ENCODE measurements at regions of chr17 and their contacts with region 1.

Region 1: DNA sequence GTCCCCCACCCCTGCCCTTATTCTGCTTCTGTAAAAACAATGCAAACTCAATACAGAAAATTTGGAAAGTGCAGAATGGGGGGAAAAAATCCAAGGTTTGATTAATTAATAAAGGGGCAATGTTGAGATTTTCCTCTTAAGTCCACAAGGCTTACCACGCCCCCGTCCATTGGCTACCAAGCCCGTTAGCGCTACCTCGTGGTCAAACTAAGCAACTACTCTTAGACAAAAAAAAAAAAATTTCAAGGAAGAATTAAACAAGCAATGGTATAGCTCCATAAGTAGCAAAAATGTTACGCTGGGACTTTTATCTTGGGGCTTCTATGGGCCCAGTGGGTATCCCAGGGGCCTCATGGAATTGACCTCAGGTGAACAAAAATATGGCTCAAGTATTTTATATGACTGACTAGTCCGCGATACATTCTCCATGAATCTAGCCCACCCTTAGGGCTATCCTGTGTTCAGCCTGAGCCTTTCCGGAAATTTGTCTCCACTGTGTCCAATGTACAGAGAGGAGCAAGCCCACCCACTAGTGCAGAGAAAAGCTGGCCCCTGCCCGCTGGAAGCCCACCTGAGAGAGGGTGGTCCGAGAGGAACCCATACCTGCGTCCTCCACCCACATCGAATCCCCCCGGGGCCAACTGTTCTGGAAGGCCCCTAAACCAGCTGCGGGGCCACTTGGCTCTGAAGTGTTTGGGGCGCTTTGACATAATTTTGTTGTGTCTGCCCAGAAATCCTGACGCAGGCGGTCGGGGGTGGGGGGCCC is 19.1 kb upstream of the TEX2 start:
- DNase-seq: peak; percentile 87
- H3K4me3 ChIP-seq: 0 out of 2 replicates have a peak overlapping the region, but pooled peaks have one; percentile 9
- H3K27ac ChIP-seq: no peak overlapping the region
- H3K4me1 ChIP-seq: peaks cover 10% of the 10 kb centered on the region; the same call in 1 of the 2 replicates
- H3K27me3 ChIP-seq: no peaks in the 10 kb centered on the region

Region 2: GRCh38 chr17:63919311-63919723 is 362.8 kb before region 1 on chr17:
- in situ Hi-C with region 1: loop called (anchors 25 kb)
- DNase-seq: peak; percentile 72
- H3K4me3 ChIP-seq: no peak overlapping the region
- H3K27ac ChIP-seq: no peak overlapping the region
- H3K4me1 ChIP-seq: no peaks in the 10 kb centered on the region
- H3K27me3 ChIP-seq: peaks cover 13% of the 10 kb centered on the region; the same call in 1 of the 2 replicates

Region 3: GRCh38 chr17:64036198-64036922 is 245.8 kb before region 1 on chr17:
- in situ Hi-C with region 1: loop called (anchors 10 kb)
- DNase-seq: no peak
- H3K4me3 ChIP-seq: no peak overlapping the region
- H3K27ac ChIP-seq: no peak overlapping the region
- H3K4me1 ChIP-seq: no peaks in the 10 kb centered on the region
- H3K27me3 ChIP-seq: no peaks in the 10 kb centered on the region

Region 4: GRCh38 chr17:64628641-64629040 is 346.5 kb after region 1 on chr17:
- in situ Hi-C with region 1: no loop called
- DNase-seq: peak; percentile 34
- H3K4me3 ChIP-seq: no peak overlapping the region
- H3K27ac ChIP-seq: peak overlapping the region; percentile 28
- H3K4me1 ChIP-seq: peaks cover 94% of the 10 kb centered on the region
- H3K27me3 ChIP-seq: no peaks in the 10 kb centered on the region